MCF 10A (cell line): ENCODE measurements at regions of chr5 and their contacts with region 1.

Region 1: DNA sequence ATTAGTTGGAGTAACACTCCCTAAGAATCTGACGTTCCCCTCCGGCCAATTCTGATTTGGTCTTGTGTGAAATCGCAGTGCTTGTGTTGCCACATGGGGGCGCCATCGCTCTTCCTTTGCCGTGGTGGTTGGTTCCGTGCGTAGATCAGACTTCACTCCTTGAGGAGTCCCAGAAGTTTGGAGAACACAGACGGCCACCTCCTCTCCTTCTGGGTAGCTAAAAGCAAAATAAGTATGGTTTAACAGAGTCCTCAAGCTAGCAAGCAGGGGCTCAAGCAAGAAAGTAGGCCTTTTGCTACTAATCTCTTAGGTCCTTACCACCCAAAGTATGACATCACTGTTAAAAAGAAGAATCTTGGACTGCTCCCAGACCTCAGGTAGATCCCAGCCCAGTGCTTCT is 59.5 kb downstream of the HSPA4 start:
- DNase-seq: peak; percentile 92
- H3K4me3 Mint-ChIP-seq: no peak overlapping the region
- H3K27ac Mint-ChIP-seq: no peak overlapping the region
- H3K4me1 Mint-ChIP-seq: peaks cover 24% of the 10 kb centered on the region
- H3K27me3 Mint-ChIP-seq: no peaks in the 10 kb centered on the region
- CTCF ChIP-seq: peak; percentile 99

Region 2: GRCh38 chr5:133225671-133226152 is 114.4 kb after region 1 on chr5:
- CTCF ChIA-PET with region 1: interaction called, 23 read pairs
- POLR2A ChIA-PET with region 1: interaction called, 11 read pairs
- intact Hi-C with region 1: loop called (anchors 1 kb)
- DNase-seq: peak; percentile 56
- H3K4me3 Mint-ChIP-seq: peak overlapping the region; percentile 23
- H3K27ac Mint-ChIP-seq: peak overlapping the region; percentile 69
- H3K4me1 Mint-ChIP-seq: peaks cover 52% of the 10 kb centered on the region
- H3K27me3 Mint-ChIP-seq: no peaks in the 10 kb centered on the region
- CTCF ChIP-seq: no peak

Region 3: GRCh38 chr5:133260715-133261114 is 149.4 kb after region 1 on chr5:
- CTCF ChIA-PET with region 1: interaction called, 13 read pairs
- POLR2A ChIA-PET with region 1: no interaction called
- intact Hi-C with region 1: loop called (anchors 1 kb)
- DNase-seq: no peak
- H3K4me3 Mint-ChIP-seq: no peak overlapping the region
- H3K27ac Mint-ChIP-seq: no peak overlapping the region
- H3K4me1 Mint-ChIP-seq: no peaks in the 10 kb centered on the region
- H3K27me3 Mint-ChIP-seq: peaks cover 15% of the 10 kb centered on the region
- CTCF ChIP-seq: peak; percentile 5

Region 4: GRCh38 chr5:133309166-133309795 is 198.0 kb after region 1 on chr5:
- CTCF ChIA-PET with region 1: interaction called, 82 read pairs
- POLR2A ChIA-PET with region 1: no interaction called
- intact Hi-C with region 1: no loop called
- DNase-seq: no peak
- H3K4me3 Mint-ChIP-seq: no peak overlapping the region
- H3K27ac Mint-ChIP-seq: no peak overlapping the region
- H3K4me1 Mint-ChIP-seq: no peaks in the 10 kb centered on the region
- H3K27me3 Mint-ChIP-seq: no peaks in the 10 kb centered on the region
- CTCF ChIP-seq: no peak

Region 5: DNA sequence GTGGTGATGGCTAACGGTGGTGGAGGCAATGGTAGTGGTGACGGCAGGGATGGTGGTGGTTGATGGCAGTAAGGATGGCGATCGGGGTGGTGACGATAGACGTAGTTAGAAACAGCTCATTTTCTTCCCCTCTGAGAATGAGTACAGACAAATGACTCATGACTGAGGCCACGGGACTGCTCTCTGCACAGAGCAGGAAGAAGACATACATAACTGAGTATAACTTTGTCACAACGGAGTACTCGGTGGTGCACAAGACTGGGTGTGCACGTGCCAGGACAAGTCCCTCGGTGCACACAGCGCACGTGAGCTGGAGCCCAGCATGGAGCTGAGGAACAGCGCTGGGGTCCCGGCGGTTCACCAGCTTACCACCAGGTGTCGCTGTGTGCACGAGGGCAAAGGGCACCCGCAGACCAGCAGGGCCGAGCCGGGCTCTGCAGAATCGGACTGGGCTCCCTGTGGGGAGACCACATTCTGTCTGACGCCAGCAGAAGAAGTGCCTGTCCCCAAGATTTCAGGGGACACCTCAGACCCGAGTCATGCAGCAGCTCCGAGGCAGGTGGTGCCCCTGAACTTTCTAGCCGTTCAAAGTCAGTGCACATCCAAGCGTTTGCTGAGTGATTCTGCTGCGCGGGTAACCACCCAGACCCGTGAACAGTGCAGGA is 312.5 kb after region 1 on chr5:
- CTCF ChIA-PET with region 1: interaction called, 60 read pairs
- POLR2A ChIA-PET with region 1: no interaction called
- intact Hi-C with region 1: loop called (anchors 1 kb)
- DNase-seq: peak; percentile 75
- H3K4me3 Mint-ChIP-seq: no peak overlapping the region
- H3K27ac Mint-ChIP-seq: no peak overlapping the region
- H3K4me1 Mint-ChIP-seq: peaks cover 15% of the 10 kb centered on the region
- H3K27me3 Mint-ChIP-seq: no peaks in the 10 kb centered on the region
- CTCF ChIP-seq: peak; percentile 99

Region 6: GRCh38 chr5:133944263-133945185 is 833.2 kb after region 1 on chr5:
- CTCF ChIA-PET with region 1: interaction called, 3 read pairs
- POLR2A ChIA-PET with region 1: interaction called, 3 read pairs
- intact Hi-C with region 1: loop called (anchors 1 kb)
- DNase-seq: peak; percentile 80
- H3K4me3 Mint-ChIP-seq: no peak overlapping the region
- H3K27ac Mint-ChIP-seq: no peak overlapping the region
- H3K4me1 Mint-ChIP-seq: no peaks in the 10 kb centered on the region
- H3K27me3 Mint-ChIP-seq: no peaks in the 10 kb centered on the region
- CTCF ChIP-seq: peak; percentile 61